Cardiac septum (tissue), 1 donor: ENCODE measurements at regions of chr17 and their contacts with region 1.

Region 1: GRCh38 chr17:30477083-30477773 is at the start of gene GOSR1:
- DNase-seq: peak; percentile 98
- total RNA-seq, gene GOSR1: 35.3 TPM

Region 2: GRCh38 chr17:30116661-30117551 is 360.3 kb before region 1 on chr17 and contains the start of gene NSRP1:
- intact Hi-C with region 1: loop called (anchors 5 kb)
- DNase-seq: peak; percentile 98
- total RNA-seq, gene NSRP1: 35.7 TPM

Region 3: DNA sequence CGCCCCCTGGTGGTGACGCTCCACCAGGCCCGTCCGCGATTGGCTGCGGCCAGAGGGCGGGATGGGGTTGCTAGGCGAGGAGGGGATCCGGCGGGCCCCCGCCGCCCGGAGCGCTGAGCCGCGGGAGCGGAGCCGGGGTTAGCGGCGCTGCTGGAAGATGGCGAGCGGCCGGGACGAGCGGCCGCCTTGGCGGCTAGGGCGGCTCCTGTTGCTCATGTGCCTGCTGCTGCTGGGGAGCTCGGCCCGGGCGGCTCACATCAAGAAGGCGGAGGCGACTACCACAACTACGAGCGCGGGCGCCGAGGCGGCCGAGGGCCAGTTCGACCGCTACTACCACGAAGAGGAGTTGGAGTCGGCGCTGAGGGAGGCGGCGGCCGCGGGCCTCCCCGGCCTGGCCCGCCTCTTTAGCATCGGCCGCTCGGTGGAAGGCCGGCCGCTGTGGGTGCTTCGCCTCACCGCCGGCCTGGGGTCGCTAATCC is 98.4 kb before region 1 on chr17 and contains the start of gene CPD:
- intact Hi-C with region 1: loop called (anchors 5 kb)
- DNase-seq: peak; percentile 99
- total RNA-seq, gene CPD: 20.7 TPM

Region 4: GRCh38 chr17:30519707-30520106 is 42.5 kb after region 1 on chr17:
- intact Hi-C with region 1: no loop called
- DNase-seq: no peak